PC-9 (cell line): ENCODE measurements at regions of chr10 and their contacts with region 1.

Region 1: GRCh38 chr10:86439544-86439943 is 72.9 kb upstream of the GRID1 start:
- DNase-seq: peak in 1 of 2 experiments; percentile 39
- H3K4me3 ChIP-seq: no peak overlapping the region
- H3K27ac ChIP-seq: no peak overlapping the region
- H3K4me1 ChIP-seq: no peaks in the 10 kb centered on the region
- H3K27me3 ChIP-seq: no peaks in the 10 kb centered on the region
- CTCF ChIP-seq: no peak

Region 2: GRCh38 chr10:86399879-86400704 is 39.5 kb before region 1 on chr10:
- CTCF ChIA-PET with region 1: no interaction called
- POLR2A ChIA-PET with region 1: no interaction called
- intact Hi-C with region 1: loop called (anchors 5 kb)
- DNase-seq: peak; percentile 81 to 86
- H3K4me3 ChIP-seq: peak overlapping the region; percentile 66
- H3K27ac ChIP-seq: no peak overlapping the region
- H3K4me1 ChIP-seq: no peaks in the 10 kb centered on the region
- H3K27me3 ChIP-seq: no peaks in the 10 kb centered on the region
- CTCF ChIP-seq: peak; percentile 75

Region 3: DNA sequence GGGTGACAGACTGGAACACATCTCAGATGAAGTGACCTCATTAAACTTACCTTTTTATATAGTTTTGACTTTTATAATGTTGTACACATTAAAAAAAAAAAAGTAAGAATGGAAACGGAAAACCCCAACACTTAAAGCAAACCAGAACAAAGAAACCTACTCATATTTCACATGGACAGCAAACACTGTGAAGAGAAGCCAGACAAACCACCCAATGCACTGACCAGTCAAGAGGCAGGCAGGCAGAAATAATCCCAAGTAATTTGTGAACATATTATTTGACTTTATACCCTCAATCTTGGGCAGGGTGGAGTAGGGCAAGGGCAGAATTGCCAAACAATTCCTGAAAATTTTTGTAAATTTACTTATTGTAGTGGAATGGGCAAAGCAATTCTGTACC is 42.2 kb after region 1 on chr10:
- CTCF ChIA-PET with region 1: no interaction called
- POLR2A ChIA-PET with region 1: no interaction called
- intact Hi-C with region 1: no loop called
- DNase-seq: no peak
- H3K4me3 ChIP-seq: no peak overlapping the region
- H3K27ac ChIP-seq: no peak overlapping the region
- H3K4me1 ChIP-seq: no peaks in the 10 kb centered on the region
- H3K27me3 ChIP-seq: no peaks in the 10 kb centered on the region
- CTCF ChIP-seq: no peak